ENCODE measurements at regions of chr1 and their contacts with region 1.

Region 1: DNA sequence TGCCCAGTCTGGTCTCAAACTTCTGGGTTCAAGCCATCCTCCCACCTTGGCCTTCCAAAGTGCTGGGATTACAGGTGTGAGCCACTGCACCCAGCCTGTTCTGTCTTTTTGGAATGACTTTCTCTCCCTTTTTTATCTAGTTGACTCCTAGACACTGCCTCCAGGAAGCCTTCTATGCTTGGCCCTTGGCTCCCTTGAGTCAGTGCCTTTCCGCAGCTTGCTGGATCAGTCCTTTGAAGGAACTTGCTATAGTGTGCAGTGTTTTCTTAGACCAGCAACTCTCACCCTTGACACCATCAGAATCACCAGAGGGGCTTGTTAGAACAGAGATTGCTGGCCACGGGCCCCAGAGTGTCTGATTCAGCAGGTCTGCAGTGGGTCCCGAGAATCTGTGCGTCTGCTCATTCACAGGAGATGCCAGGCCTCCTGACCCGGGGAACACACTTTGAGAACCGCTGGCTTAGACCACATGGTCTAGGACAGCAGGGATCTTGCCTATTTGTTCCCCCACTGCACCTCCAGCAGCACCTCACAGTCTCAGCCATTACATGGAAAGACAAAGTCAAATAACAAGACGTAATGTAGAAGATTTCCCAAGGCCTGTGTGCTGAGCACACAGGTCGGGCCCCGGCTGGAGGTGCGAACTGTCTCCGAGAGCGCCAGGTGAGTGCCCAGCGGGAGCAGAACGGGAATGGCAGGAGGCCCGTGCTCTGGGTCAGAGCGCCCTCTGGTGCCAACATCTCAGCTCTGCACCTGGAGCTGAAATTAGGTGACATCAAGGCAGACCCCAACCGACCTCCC is 27.4 kb upstream of the CTPS1 start:
- DNase-seq: peak in 1 of 2 donors; percentile 86
- H3K4me3 ChIP-seq: no peak overlapping the region
- H3K27ac ChIP-seq: no peak overlapping the region
- H3K4me1 ChIP-seq: peaks cover 4 to 9% of the 10 kb centered on the region in 2 donors
- H3K27me3 ChIP-seq: no peaks in the 10 kb centered on the region
- CTCF ChIP-seq: peak; percentile 89 to 95 (median 91)

Region 2: DNA sequence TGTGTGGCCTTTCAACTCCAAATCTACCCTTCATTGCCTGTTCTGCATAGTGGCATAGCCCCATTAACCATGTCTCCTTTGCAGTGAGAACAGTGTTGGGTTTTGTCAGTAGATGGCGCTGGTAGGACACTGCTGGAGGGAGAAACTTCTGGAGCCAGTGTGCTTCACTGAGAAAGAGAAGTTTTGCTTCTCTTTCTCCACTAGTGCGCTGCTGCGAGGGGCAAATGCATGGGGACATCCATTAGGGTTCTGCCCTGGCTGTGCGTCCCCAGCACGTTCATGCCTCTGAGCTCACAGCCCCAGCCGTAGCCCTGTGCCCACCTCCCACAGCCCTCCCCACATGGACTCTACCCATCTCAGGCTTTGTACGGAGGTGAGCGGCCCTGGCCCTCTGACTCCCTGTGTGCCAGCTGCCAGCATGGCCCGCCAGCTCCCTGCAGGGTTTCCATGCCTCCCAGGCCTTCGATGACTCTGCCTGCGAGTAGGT is 339.8 kb before region 1 on chr1:
- intact Hi-C with region 1: loop called (anchors 1 kb)
- DNase-seq: peak in 1 of 2 donors; percentile 82
- H3K4me3 ChIP-seq: no peak overlapping the region
- H3K27ac ChIP-seq: no peak overlapping the region
- H3K4me1 ChIP-seq: peaks cover 0 to 2% of the 10 kb centered on the region in 2 donors
- H3K27me3 ChIP-seq: no peaks in the 10 kb centered on the region
- CTCF ChIP-seq: peak; percentile 75 to 93 (median 82)

Region 3: GRCh38 chr1:40774266-40774998 is 177.7 kb before region 1 on chr1:
- intact Hi-C with region 1: loop called (anchors 5 kb)
- DNase-seq: no peak
- H3K4me3 ChIP-seq: no peak overlapping the region
- H3K27ac ChIP-seq: peak overlapping the region in 1 of 2 donors; percentile 46
- H3K4me1 ChIP-seq: no peaks in the 10 kb centered on the region
- H3K27me3 ChIP-seq: no peaks in the 10 kb centered on the region
- CTCF ChIP-seq: peak; percentile 59 to 79 (median 60)

Region 4: GRCh38 chr1:40849801-40850592 is 102.1 kb before region 1 on chr1:
- intact Hi-C with region 1: loop called (anchors 1 kb)
- DNase-seq: peak in 1 of 2 donors; percentile 85
- H3K4me3 ChIP-seq: no peak overlapping the region
- H3K27ac ChIP-seq: peak overlapping the region in 1 of 2 donors; percentile 57
- H3K4me1 ChIP-seq: peaks cover 0 to 12% of the 10 kb centered on the region in 2 donors
- H3K27me3 ChIP-seq: no peaks in the 10 kb centered on the region
- CTCF ChIP-seq: peak; percentile 85 to 91 (median 89)

Region 5: DNA sequence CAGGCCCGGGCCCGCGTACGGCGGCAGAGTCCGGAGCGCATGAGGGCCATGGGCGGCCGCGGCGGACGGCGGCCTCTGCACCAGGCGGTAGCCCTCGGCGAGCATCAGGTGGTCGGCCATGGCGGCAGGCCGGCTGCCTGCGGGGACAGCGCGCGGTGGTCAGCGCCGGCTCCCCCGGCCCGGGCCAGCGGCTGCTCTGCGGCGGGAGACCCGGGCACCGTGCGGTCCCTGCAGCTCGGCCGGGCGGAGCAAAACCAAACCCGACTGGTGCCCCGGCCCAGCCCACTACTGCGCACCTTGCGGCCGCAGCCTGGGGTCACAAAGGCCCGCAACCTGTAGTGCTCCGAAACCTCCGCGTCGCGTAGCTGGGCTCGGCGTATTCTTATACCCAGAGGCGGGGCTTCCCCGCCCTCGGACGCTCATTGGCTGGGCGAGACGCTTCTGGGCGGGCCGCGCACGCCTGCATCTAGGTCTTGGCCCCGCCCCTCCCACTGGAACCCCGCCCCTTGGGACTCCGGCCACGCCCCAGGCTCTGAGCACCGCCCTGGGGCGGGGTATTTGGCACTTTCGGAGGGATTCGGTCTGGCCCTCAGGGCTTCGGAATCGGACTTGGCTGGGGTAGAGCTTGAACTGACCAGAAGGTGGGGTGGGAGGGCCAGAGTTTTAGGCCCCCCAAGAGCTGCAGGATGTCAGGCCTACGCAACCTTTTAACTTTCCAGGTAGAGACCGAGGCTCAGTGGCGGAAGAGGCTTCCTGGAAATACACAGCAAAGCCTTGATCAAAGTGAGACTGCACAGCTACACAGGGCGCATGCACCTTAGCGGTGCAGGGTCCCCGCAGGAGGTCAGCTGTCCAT is 89.9 kb before region 1 on chr1 and contains the start of gene CITED4:
- intact Hi-C with region 1: loop called (anchors 1 kb)
- DNase-seq: peak; percentile 82 to 97
- H3K4me3 ChIP-seq: peak within 1 kb of the TSS; percentile 97
- H3K27ac ChIP-seq: peak within 1 kb of the TSS; percentile 79 to 87
- H3K4me1 ChIP-seq: peaks cover 10 to 25% of the 10 kb centered on the region in 2 donors
- H3K27me3 ChIP-seq: no peaks in the 10 kb centered on the region
- CTCF ChIP-seq: peak in 2 of 3 experiments; percentile 14 to 30
- total RNA-seq, gene CITED4: 47.6 TPM

Region 6: GRCh38 chr1:40906781-40907400 is 45.3 kb before region 1 on chr1:
- intact Hi-C with region 1: no loop called
- DNase-seq: no peak
- H3K4me3 ChIP-seq: no peak overlapping the region
- H3K27ac ChIP-seq: no peak overlapping the region
- H3K4me1 ChIP-seq: peaks cover 0 to 8% of the 10 kb centered on the region in 2 donors
- H3K27me3 ChIP-seq: no peaks in the 10 kb centered on the region
- CTCF ChIP-seq: no peak

Region 7: GRCh38 chr1:41038105-41038504 is 86.0 kb after region 1 on chr1:
- intact Hi-C with region 1: no loop called
- DNase-seq: no peak
- H3K4me3 ChIP-seq: no peak overlapping the region
- H3K27ac ChIP-seq: no peak overlapping the region
- H3K4me1 ChIP-seq: no peaks in the 10 kb centered on the region
- H3K27me3 ChIP-seq: no peaks in the 10 kb centered on the region
- CTCF ChIP-seq: peak in 1 of 3 experiments; percentile 26

Measured in ascending aorta (tissue), 2 donors.